PC-9 (cell line): ENCODE measurements at regions of chr17 and their contacts with region 1.

Region 1: GRCh38 chr17:32259586-32259985 is 6.0 kb upstream of the RHBDL3 start:
- DNase-seq: no peak
- H3K4me3 ChIP-seq: no peak overlapping the region
- H3K27ac ChIP-seq: no peak overlapping the region
- H3K4me1 ChIP-seq: no peaks in the 10 kb centered on the region
- H3K27me3 ChIP-seq: peaks cover 37% of the 10 kb centered on the region
- CTCF ChIP-seq: no peak

Region 2: GRCh38 chr17:31645351-31645750 is 614.2 kb before region 1 on chr17:
- CTCF ChIA-PET with region 1: no interaction called
- POLR2A ChIA-PET with region 1: no interaction called
- intact Hi-C with region 1: no loop called
- DNase-seq: no peak
- H3K4me3 ChIP-seq: no peak overlapping the region
- H3K27ac ChIP-seq: no peak overlapping the region
- H3K4me1 ChIP-seq: no peaks in the 10 kb centered on the region
- H3K27me3 ChIP-seq: no peaks in the 10 kb centered on the region
- CTCF ChIP-seq: no peak

Region 3: DNA sequence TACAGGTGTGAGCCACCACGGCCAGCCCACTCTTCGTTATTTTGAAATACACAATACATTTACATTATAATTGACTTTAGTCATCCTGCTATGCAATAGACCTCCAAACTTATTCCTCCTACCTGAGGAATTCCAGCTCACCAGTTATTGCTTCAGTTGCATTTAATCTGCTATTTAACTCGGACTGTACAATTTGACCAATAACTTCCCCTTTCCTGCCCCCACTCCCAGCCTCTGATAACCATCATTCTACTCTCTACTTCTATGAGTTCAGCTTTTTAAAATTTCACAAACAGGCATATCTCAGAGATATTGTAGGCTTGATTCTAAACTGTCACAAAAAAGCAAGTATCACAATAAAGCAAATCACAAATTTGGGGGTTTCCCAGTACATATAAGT is 557.5 kb before region 1 on chr17:
- CTCF ChIA-PET with region 1: no interaction called
- POLR2A ChIA-PET with region 1: interaction called, 30 read pairs
- intact Hi-C with region 1: no loop called
- DNase-seq: no peak
- H3K4me3 ChIP-seq: no peak overlapping the region
- H3K27ac ChIP-seq: no peak overlapping the region
- H3K4me1 ChIP-seq: no peaks in the 10 kb centered on the region
- H3K27me3 ChIP-seq: no peaks in the 10 kb centered on the region
- CTCF ChIP-seq: no peak

Region 4: DNA sequence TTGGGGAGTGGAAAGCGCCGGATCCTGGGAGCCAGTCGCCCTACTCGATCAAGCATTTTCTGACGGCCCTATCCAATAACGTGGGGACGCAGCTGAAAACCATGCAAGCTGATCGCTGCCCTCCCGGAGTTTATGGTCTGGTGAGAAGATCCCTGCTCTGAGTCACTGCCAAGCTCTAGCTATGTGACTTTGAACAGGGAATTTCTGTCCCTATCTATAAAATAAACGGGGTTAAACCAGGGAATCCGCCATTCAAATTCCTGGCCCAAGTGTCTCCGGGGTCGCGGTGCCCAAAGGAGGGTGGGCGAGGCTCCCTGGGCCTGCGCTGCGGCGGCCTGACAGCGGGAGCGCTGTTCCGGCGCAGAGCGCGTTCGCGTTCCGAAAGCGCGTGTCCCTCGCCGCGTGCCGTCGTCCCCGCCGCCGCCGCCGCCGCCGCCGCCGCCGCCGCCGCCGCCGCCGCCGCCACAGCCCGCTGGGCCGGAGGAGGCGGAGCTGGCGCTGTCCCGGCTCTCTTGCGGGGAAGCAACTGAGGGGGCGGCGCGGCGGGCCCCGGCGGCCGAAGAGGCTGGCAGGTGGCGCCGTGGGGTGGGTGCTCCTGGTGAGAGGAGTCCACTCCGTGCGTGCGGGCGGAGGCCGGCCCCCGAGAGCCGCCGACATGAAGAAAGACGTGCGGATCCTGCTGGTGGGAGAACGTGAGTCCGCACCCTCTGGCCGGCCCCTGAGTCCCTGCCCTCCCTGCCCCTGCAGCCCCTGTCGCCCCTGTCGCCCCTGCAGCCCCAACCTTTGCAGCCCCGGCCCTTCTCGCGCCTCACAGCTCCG is 117.3 kb before region 1 on chr17 and contains the start of gene RHOT1:
- CTCF ChIA-PET with region 1: interaction called, 15 read pairs
- POLR2A ChIA-PET with region 1: no interaction called
- intact Hi-C with region 1: no loop called
- DNase-seq: peak; percentile 75 to 84
- H3K4me3 ChIP-seq: peak within 1 kb of the TSS; percentile 98
- H3K27ac ChIP-seq: peak within 1 kb of the TSS; percentile 78
- H3K4me1 ChIP-seq: peaks cover 10% of the 10 kb centered on the region; the same call in 1 of the 2 replicates
- H3K27me3 ChIP-seq: no peaks in the 10 kb centered on the region
- CTCF ChIP-seq: 0 out of 2 replicates have a peak, but pooled peaks have one; percentile 35
- total RNA-seq, gene RHOT1: 20.4 and 28.3 TPM in 2 replicates

Region 5: DNA sequence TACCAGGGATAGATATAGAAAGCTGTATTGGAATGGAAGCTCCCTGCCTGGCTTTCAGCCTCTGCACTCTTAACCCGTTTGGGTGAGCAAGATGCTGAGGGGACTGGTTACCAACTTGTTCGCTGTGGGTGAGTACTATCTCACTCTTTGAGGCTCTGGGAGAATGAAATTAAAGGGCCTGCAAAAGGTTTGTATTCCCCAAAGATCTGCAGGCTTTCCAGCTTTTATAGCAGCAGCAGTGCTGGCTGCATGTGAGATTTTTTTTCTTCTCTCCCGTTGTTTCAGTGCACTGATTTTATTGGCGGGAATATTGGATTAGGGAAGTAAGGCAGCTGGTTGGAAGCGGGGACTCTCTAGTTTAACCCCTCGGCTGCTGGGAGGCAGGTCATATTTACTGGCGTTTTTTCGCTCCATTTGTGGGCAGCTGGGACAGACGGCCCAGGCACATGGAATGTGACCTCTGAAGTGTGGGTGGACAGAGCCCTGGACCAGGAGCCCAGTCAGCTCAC is 51.5 kb after region 1 on chr17:
- CTCF ChIA-PET with region 1: no interaction called
- POLR2A ChIA-PET with region 1: interaction called, 14 read pairs
- intact Hi-C with region 1: no loop called
- DNase-seq: no peak
- H3K4me3 ChIP-seq: no peak overlapping the region
- H3K27ac ChIP-seq: no peak overlapping the region
- H3K4me1 ChIP-seq: no peaks in the 10 kb centered on the region
- H3K27me3 ChIP-seq: peaks cover 56% of the 10 kb centered on the region
- CTCF ChIP-seq: no peak

Region 6: GRCh38 chr17:32349854-32350665 is 90.5 kb after region 1 on chr17 and contains the start of gene ZNF207:
- CTCF ChIA-PET with region 1: no interaction called
- POLR2A ChIA-PET with region 1: no interaction called
- intact Hi-C with region 1: no loop called
- DNase-seq: peak; percentile 84 to 92
- H3K4me3 ChIP-seq: peak within 1 kb of the TSS; percentile 68
- H3K27ac ChIP-seq: peak within 1 kb of the TSS; percentile 87
- H3K4me1 ChIP-seq: peaks cover 23% of the 10 kb centered on the region; the same call in 1 of the 2 replicates
- H3K27me3 ChIP-seq: no peaks in the 10 kb centered on the region
- CTCF ChIP-seq: no peak
- total RNA-seq, gene ZNF207: 186 and 198 TPM in 2 replicates

Region 7: GRCh38 chr17:32483451-32484019 is 223.9 kb after region 1 on chr17:
- CTCF ChIA-PET with region 1: no interaction called
- POLR2A ChIA-PET with region 1: no interaction called
- intact Hi-C with region 1: no loop called
- DNase-seq: peak; percentile 37 to 53
- H3K4me3 ChIP-seq: no peak overlapping the region
- H3K27ac ChIP-seq: no peak overlapping the region
- H3K4me1 ChIP-seq: peaks cover 8% of the 10 kb centered on the region; the same call in 1 of the 2 replicates
- H3K27me3 ChIP-seq: no peaks in the 10 kb centered on the region
- CTCF ChIP-seq: peak; percentile 61; the same call in 1 of the 2 replicates